AG04450 (cell line): ENCODE measurements at regions of chr16 and their contacts with region 1.

Region 1: DNA sequence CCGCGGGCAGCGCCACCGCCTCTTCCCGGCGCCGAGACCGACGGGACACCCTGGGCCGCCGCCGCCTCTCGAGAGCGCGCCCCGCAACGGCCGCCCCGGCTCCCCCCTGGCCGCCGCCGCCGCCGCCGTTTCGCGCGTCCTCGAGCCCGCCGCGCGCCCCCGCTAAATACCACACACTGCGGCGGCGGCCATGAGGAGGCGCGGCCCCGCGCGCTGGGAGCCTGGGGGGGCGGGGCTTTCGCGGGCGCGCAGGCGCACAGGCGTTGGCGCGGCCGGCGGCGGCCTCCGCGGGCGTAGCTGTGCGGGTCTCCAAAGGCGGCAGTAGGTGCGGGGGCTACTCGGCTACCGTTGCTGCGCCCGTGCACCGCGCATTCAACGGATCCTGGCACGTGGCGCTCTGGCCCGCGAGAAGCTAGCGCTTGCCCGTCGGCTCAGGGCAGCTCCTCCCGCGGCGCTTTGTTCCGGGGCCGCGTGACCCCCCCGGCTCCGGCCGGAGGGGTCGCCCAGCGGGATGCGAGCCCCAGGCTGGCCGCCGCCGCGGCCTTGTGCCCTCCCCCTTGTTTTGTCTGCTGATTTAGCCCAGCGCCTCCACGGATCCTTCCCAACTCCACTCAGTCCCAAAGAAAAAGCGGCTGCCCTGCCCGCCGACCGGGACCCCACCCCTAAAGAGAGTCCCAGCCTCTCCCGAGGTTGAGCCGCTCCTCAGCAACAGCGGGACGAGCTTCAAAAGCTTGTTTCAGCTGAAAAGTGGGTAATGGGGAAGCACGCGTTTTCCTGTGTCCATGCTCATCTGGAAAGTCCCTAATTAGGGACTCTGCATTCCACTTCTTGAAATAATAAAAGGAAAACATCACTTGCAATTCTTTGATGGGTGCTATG is at the start of gene SIAH1:
- DNase-seq: no peak
- H3K4me3 ChIP-seq: peak within 1 kb of the TSS; percentile 82
- H3K27ac ChIP-seq: peak within 1 kb of the TSS; percentile 87
- H3K27me3 ChIP-seq: no peaks in the 10 kb centered on the region
- CTCF ChIP-seq: no peak
- polyA plus RNA-seq, gene SIAH1: 19.9 and 21.6 TPM in 2 replicates

Region 2: GRCh38 chr16:48353565-48354163 is 31.8 kb before region 1 on chr16:
- CTCF ChIA-PET with region 1: interaction called, 3 read pairs
- POLR2A ChIA-PET with region 1: interaction called, 10 read pairs
- DNase-seq: peak; percentile 37
- H3K4me3 ChIP-seq: no peak overlapping the region
- H3K27ac ChIP-seq: no peak overlapping the region
- H3K27me3 ChIP-seq: no peaks in the 10 kb centered on the region
- CTCF ChIP-seq: peak; percentile 92

Region 3: DNA sequence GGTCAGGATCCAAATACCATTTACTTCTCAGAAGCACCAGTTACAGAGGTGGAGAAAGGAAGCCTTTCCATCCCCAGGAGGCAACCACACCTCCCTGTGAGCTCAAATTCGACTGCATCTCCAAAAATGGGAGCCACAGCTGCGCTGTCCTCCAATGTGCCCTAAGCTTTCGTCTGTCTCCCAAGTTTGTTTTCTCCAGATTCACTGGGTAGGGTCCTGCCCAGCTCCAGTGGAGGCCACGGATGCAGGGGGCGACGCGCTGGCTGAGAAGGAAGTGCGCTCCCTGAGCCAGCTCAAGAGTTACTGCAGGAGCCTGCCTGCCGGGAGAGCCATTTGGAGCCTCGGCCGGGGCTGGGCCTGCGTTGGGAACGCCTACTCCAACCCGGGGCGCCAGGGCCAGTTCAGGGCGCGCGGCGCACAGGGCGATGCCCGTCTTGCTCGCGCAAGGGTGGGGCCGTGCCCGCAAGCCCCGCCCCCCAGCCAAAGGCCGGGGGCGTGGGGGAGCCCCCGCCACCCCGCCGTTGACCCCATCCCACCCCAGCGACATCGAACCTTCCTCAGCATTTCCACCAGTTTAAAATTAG is 19.8 kb before region 1 on chr16:
- CTCF ChIA-PET with region 1: no interaction called
- POLR2A ChIA-PET with region 1: interaction called, 18 read pairs
- DNase-seq: no peak
- H3K4me3 ChIP-seq: peak overlapping the region; percentile 63
- H3K27ac ChIP-seq: peak overlapping the region; percentile 95
- H3K27me3 ChIP-seq: no peaks in the 10 kb centered on the region
- CTCF ChIP-seq: peak; percentile 17; the same call in 1 of the 2 replicates

Region 4: GRCh38 chr16:48409839-48410611 is 24.5 kb after region 1 on chr16:
- CTCF ChIA-PET with region 1: interaction called, 6 read pairs
- POLR2A ChIA-PET with region 1: interaction called, 12 read pairs
- DNase-seq: peak; percentile 69
- H3K4me3 ChIP-seq: no peak overlapping the region
- H3K27ac ChIP-seq: peak overlapping the region; percentile 69
- H3K27me3 ChIP-seq: no peaks in the 10 kb centered on the region
- CTCF ChIP-seq: no peak

Region 5: GRCh38 chr16:48608452-48608851 is 222.9 kb after region 1 on chr16:
- CTCF ChIA-PET with region 1: no interaction called
- POLR2A ChIA-PET with region 1: no interaction called
- DNase-seq: no peak
- H3K4me3 ChIP-seq: peak overlapping the region; percentile 99
- H3K27ac ChIP-seq: peak overlapping the region; percentile 52
- H3K27me3 ChIP-seq: no peaks in the 10 kb centered on the region
- CTCF ChIP-seq: no peak